Dorsolateral prefrontal cortex (tissue), 120 donors: ENCODE measurements at regions of chr15 and their contacts with region 1.

Region 1: GRCh38 chr15:77617476-77618230 is 15.1 kb downstream of the LINGO1 start:
- DNase-seq: no peak
- H3K4me3 ChIP-seq: no peak overlapping the region
- H3K27ac ChIP-seq: peak overlapping the region in 39 of 59 donors; percentile 1 to 78 (median 38)
- H3K27me3 ChIP-seq: no peaks in the 10 kb centered on the region
- CTCF ChIP-seq: peak in 46 of 56 donors; percentile 13 to 50 (median 35)

Region 2: DNA sequence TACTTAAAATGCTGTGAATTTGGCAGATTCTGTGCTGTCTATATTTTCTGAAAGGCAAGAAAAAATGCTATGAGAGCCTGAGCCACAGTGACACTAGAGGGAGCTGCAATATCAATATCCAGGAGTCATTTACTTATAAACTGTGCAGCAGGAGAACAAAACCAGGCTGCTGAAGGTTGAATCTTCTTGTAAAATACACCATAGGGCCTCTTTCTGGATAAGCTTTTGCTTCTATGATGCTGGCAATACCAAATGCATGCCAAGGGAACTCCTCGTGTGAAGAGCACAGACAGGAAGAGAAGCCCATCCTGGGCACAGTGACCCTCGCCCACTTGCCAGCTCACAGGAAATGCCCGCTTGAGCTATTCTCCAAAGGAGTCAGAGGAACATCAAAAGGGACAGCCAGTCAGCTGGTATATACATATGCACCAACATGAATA is 498.8 kb before region 1 on chr15:
- intact Hi-C with region 1: loop called in 1 of 2 experiments (anchors 10 kb)
- DNase-seq: peak in 2 of 10 donors; percentile 40 to 73
- H3K4me3 ChIP-seq: no peak overlapping the region
- H3K27ac ChIP-seq: peak overlapping the region in 26 of 59 donors; percentile 2 to 71 (median 38)
- H3K27me3 ChIP-seq: no peaks in the 10 kb centered on the region
- CTCF ChIP-seq: peak; percentile 54 to 93 (median 78)

Region 3: GRCh38 chr15:77966540-77967290 is 349.1 kb after region 1 on chr15:
- intact Hi-C with region 1: no loop called
- DNase-seq: peak in 7 of 10 donors; percentile 44 to 75 (median 64)
- H3K4me3 ChIP-seq: no peak overlapping the region
- H3K27ac ChIP-seq: no peak overlapping the region
- H3K27me3 ChIP-seq: no peaks in the 10 kb centered on the region
- CTCF ChIP-seq: peak; percentile 70 to 97 (median 89)